Activated CD4-positive, alpha-beta memory T cell treated with anti-CD3 and anti-CD28 coated beads for 36 hours (primary cell): ENCODE measurements at regions of chr9 and their contacts with region 1.

Region 1: GRCh38 chr9:96150324-96151227 is 151.4 kb downstream of the HSD17B3 start:
- DNase-seq: peak; percentile 79
- H3K4me3 Mint-ChIP-seq: no peak overlapping the region
- H3K27ac Mint-ChIP-seq: peak overlapping the region; percentile 42
- H3K4me1 Mint-ChIP-seq: peaks cover 24% of the 10 kb centered on the region
- H3K27me3 Mint-ChIP-seq: peaks cover 24% of the 10 kb centered on the region

Region 2: DNA sequence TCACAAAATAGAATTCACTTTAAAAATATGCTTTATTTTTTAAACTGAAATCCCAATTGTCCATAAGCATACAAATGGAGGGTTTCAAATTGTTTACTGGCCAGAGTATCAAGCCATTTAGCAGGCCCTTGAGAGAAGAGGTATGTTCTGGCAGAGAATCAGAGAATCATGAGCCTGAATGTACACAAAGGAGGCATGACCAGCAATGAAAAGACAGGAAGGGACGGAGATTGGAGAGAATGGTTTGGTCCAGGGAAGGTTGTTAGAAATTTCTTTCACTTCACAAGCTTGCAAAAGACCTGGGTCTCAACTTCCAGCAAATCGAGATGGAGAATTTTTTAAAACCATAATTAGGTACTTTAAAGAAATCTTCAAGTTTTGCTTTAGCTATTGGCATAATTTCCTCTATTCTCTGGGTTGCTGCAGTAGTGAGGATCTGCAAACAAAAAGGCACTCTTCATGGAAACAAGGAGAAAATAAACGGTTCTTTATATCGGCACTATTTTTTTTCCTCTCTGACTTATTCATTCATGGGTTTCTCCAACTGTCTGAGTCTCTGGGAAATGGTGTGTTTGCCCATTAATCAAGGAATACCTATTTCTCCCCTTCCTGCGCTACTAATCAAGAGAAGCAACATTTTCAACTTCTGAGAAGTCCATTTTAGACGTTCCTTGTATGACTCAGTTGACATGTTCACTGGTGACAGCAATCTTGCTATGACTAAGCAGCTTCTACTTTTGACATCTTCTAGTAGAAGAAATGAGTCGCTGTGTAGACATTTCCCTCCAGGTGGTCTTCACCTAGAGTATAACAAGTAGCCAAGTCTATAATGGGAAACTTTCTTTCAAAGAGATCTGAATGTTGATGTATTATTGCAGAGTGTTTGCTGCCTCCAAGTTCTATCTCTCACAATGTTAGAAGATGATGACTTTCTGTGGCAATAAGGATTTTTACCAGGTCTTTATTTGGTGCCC is 298.2 kb before region 1 on chr9:
- CTCF ChIA-PET with region 1: no interaction called
- POLR2A ChIA-PET with region 1: no interaction called
- intact Hi-C with region 1: loop called (anchors 10 kb)
- DNase-seq: no peak
- H3K4me3 Mint-ChIP-seq: no peak overlapping the region
- H3K27ac Mint-ChIP-seq: no peak overlapping the region
- H3K4me1 Mint-ChIP-seq: peaks cover 22% of the 10 kb centered on the region
- H3K27me3 Mint-ChIP-seq: no peaks in the 10 kb centered on the region

Region 3: GRCh38 chr9:96020792-96021550 is 129.6 kb before region 1 on chr9:
- CTCF ChIA-PET with region 1: no interaction called
- POLR2A ChIA-PET with region 1: no interaction called
- intact Hi-C with region 1: loop called (anchors 2 kb)
- DNase-seq: peak; percentile 65
- H3K4me3 Mint-ChIP-seq: peak overlapping the region; percentile 73
- H3K27ac Mint-ChIP-seq: peak overlapping the region; percentile 61
- H3K4me1 Mint-ChIP-seq: peaks cover 52% of the 10 kb centered on the region
- H3K27me3 Mint-ChIP-seq: peaks cover 12% of the 10 kb centered on the region

Region 4: GRCh38 chr9:96230002-96230401 is 79.4 kb after region 1 on chr9:
- CTCF ChIA-PET with region 1: no interaction called
- POLR2A ChIA-PET with region 1: no interaction called
- intact Hi-C with region 1: no loop called
- DNase-seq: no peak
- H3K4me3 Mint-ChIP-seq: no peak overlapping the region
- H3K27ac Mint-ChIP-seq: no peak overlapping the region
- H3K4me1 Mint-ChIP-seq: no peaks in the 10 kb centered on the region
- H3K27me3 Mint-ChIP-seq: peaks cover 32% of the 10 kb centered on the region

Region 5: GRCh38 chr9:96241391-96241809 is 90.8 kb after region 1 on chr9:
- CTCF ChIA-PET with region 1: no interaction called
- POLR2A ChIA-PET with region 1: no interaction called
- intact Hi-C with region 1: loop called (anchors 1 kb)
- DNase-seq: peak; percentile 84
- H3K4me3 Mint-ChIP-seq: peak overlapping the region; percentile 34
- H3K27ac Mint-ChIP-seq: no peak overlapping the region
- H3K4me1 Mint-ChIP-seq: peaks cover 17% of the 10 kb centered on the region
- H3K27me3 Mint-ChIP-seq: peaks cover 69% of the 10 kb centered on the region

Region 6: DNA sequence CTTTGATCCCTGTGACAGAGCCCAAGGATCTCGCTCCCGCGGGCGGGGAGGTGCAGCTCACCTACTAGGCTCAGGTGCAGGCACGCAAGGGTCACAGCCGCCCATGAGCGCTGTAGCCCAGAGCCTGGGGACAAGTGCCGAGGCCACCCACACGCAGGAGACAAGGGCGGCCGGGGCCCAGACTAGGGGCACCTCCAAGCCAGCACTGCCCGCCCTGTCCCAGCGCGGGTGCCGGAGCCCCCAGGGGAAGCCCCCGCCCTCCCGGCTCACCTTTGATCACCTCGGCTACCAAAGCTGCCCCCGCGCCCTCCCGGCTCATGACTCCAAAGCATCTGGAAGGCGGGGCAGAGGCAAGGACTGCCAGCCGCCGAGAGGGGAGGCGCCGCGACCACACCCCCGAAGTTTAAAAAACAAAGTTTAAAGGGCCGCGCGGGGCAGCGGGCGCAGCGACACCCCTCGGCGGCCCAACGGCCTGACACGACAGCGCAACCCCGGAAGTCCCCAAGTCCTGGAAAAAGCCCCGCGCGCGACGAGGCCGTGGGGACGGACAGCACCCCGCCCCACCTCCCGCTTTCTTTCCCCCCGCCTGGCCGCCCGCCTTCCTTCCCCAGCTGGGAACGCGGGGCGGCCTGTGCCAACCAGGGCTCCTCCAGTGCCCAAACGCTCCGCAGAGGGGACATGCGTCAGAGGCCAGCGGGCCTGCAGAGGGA is 416.1 kb after region 1 on chr9:
- CTCF ChIA-PET with region 1: no interaction called
- POLR2A ChIA-PET with region 1: no interaction called
- intact Hi-C with region 1: no loop called
- DNase-seq: peak; percentile 84
- H3K4me3 Mint-ChIP-seq: peak overlapping the region; percentile 77
- H3K27ac Mint-ChIP-seq: peak overlapping the region; percentile 83
- H3K4me1 Mint-ChIP-seq: peaks cover 30% of the 10 kb centered on the region
- H3K27me3 Mint-ChIP-seq: peaks cover 6% of the 10 kb centered on the region